MCF 10A (cell line): ENCODE measurements at regions of chrX and their contacts with region 1.

Region 1: GRCh38 chrX:24371391-24371972 is 11.0 kb downstream of the SUPT20HL1 start:
- DNase-seq: peak; percentile 74
- H3K4me3 Mint-ChIP-seq: no peak overlapping the region
- H3K27ac Mint-ChIP-seq: no peak overlapping the region
- H3K4me1 Mint-ChIP-seq: no peaks in the 10 kb centered on the region
- H3K27me3 Mint-ChIP-seq: peaks cover 29% of the 10 kb centered on the region
- CTCF ChIP-seq: peak; percentile 75

Region 2: GRCh38 chrX:24341795-24342194 is 29.7 kb before region 1 on chrX:
- CTCF ChIA-PET with region 1: interaction called, 10 read pairs
- POLR2A ChIA-PET with region 1: no interaction called
- intact Hi-C with region 1: no loop called
- DNase-seq: no peak
- H3K4me3 Mint-ChIP-seq: no peak overlapping the region
- H3K27ac Mint-ChIP-seq: no peak overlapping the region
- H3K4me1 Mint-ChIP-seq: no peaks in the 10 kb centered on the region
- H3K27me3 Mint-ChIP-seq: peaks cover 70% of the 10 kb centered on the region
- CTCF ChIP-seq: no peak